Endothelial cell of umbilical vein (primary cell): ENCODE measurements at regions of chr2 and their contacts with region 1.

Region 1: GRCh38 chr2:19504400-19505198 is 146.2 kb upstream of the OSR1 start:
- DNase-seq: no peak
- H3K4me3 ChIP-seq: no peak overlapping the region
- H3K27ac ChIP-seq: no peak overlapping the region
- H3K4me1 ChIP-seq: no peaks in the 10 kb centered on the region
- H3K27me3 ChIP-seq: no peaks in the 10 kb centered on the region
- CTCF ChIP-seq: no peak
- POLR2A ChIP-seq: no peak

Region 2: DNA sequence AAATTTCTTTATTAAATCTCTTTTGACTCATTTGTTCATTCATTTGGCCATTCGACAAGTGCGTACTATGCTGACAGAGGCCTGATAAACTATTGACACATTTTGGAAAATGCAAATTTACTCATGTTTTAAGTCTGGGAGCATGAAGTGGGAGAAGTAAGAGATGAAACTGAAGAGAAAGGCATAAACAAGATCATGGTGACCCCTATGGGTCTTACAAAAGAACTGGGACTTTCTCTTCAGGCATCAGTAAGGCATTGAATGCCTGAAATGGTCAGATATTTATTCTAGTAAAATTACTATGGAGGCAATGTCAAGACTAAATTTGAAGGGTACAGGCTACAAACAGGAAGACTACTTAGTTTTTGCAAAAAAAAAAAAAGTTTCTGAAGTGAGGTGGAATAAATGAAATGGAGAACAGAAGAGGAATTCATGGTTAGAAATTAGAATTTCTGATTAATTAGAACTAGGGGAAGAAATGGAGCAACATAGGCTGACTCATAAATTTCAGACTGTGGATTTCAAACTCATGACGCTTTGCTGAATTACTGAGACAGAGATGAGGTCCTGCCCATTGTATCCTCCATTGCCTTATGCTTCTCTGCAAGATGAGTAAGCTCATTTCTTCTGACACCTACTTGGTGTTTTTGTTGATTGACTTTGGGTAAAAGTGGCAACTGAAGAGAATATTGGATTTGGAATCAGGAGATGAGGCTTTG is 1931.4 kb before region 1 on chr2:
- CTCF ChIA-PET with region 1: no interaction called
- POLR2A ChIA-PET with region 1: no interaction called
- dilution Hi-C with region 1: no loop called
- intact Hi-C with region 1: no loop called
- DNase-seq: no peak
- H3K4me3 ChIP-seq: no peak overlapping the region
- H3K27ac ChIP-seq: no peak overlapping the region
- H3K4me1 ChIP-seq: no peaks in the 10 kb centered on the region
- H3K27me3 ChIP-seq: no peaks in the 10 kb centered on the region
- CTCF ChIP-seq: no peak
- POLR2A ChIP-seq: no peak

Region 3: DNA sequence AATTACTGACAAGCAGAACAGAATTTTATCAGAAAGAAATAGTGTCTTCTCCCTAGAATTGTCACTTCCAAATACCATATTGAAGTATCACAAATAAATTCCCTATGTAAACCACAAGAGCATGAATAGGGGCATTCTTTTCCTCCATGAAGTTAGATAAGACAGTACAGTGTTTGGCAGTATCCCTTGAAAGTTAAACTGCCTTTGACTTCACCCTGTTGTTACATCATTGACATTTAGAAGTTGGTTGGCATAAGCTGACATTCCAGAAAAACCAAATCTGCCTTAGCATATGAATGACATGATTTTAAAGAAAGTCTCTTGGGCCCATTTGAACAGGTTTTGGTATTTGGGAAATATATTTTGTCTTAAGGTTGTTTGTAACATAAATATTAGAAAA is 96.0 kb before region 1 on chr2:
- CTCF ChIA-PET with region 1: no interaction called
- POLR2A ChIA-PET with region 1: no interaction called
- dilution Hi-C with region 1: no loop called
- intact Hi-C with region 1: loop called (anchors 10 kb)
- DNase-seq: no peak
- H3K4me3 ChIP-seq: no peak overlapping the region
- H3K27ac ChIP-seq: no peak overlapping the region
- H3K4me1 ChIP-seq: no peaks in the 10 kb centered on the region
- H3K27me3 ChIP-seq: no peaks in the 10 kb centered on the region
- CTCF ChIP-seq: no peak
- POLR2A ChIP-seq: no peak